ENCODE measurements at regions of chr17 and their contacts with region 1.

Region 1: GRCh38 chr17:48492401-48493298 is 38.2 kb downstream of the HOXB1 start:
- DNase-seq: no peak
- H3K4me3 ChIP-seq: no peak overlapping the region
- H3K27me3 ChIP-seq: peaks cover 1% of the 10 kb centered on the region; the same call in 1 of the 2 replicates
- CTCF ChIP-seq: peak; percentile 71

Region 2: GRCh38 chr17:48505787-48506645 is 13.4 kb after region 1 on chr17:
- CTCF ChIA-PET with region 1: interaction called, 18 read pairs
- POLR2A ChIA-PET with region 1: no interaction called
- DNase-seq: peak; percentile 51
- H3K4me3 ChIP-seq: no peak overlapping the region
- H3K27me3 ChIP-seq: peaks cover 2% of the 10 kb centered on the region; the same call in 1 of the 2 replicates
- CTCF ChIP-seq: no peak

Region 3: GRCh38 chr17:48547808-48548522 is 55.3 kb after region 1 on chr17:
- CTCF ChIA-PET with region 1: interaction called, 3 read pairs
- POLR2A ChIA-PET with region 1: interaction called, 20 read pairs
- DNase-seq: no peak
- H3K4me3 ChIP-seq: no peak overlapping the region
- H3K27me3 ChIP-seq: peaks cover 14% of the 10 kb centered on the region
- CTCF ChIP-seq: no peak

Measured in BJ (cell line).